ENCODE measurements at regions of chr10 and their contacts with region 1.

Region 1: GRCh38 chr10:25875556-25876165 is 58.4 kb upstream of the MYO3A start:
- DNase-seq: peak; percentile 33 to 50 (median 39)
- H3K4me3 ChIP-seq: no peak overlapping the region
- H3K4me3 Mint-ChIP-seq: no peak overlapping the region
- H3K27ac ChIP-seq: no peak overlapping the region
- H3K27ac Mint-ChIP-seq: no peak overlapping the region
- H3K4me1 ChIP-seq: no peaks in the 10 kb centered on the region
- H3K4me1 Mint-ChIP-seq: no peaks in the 10 kb centered on the region
- H3K27me3 ChIP-seq: no peaks in the 10 kb centered on the region
- H3K27me3 Mint-ChIP-seq: peaks cover 1 to 2% of the 10 kb centered on the region in 2 donors

Region 2: GRCh38 chr10:25899304-25899703 is 23.6 kb after region 1 on chr10:
- CTCF ChIA-PET with region 1: interaction called, 12 read pairs
- POLR2A ChIA-PET with region 1: no interaction called
- intact Hi-C with region 1: no loop called
- DNase-seq: no peak
- H3K4me3 ChIP-seq: no peak overlapping the region
- H3K4me3 Mint-ChIP-seq: no peak overlapping the region
- H3K27ac ChIP-seq: no peak overlapping the region
- H3K27ac Mint-ChIP-seq: no peak overlapping the region
- H3K4me1 ChIP-seq: no peaks in the 10 kb centered on the region
- H3K4me1 Mint-ChIP-seq: no peaks in the 10 kb centered on the region
- H3K27me3 ChIP-seq: no peaks in the 10 kb centered on the region
- H3K27me3 Mint-ChIP-seq: peaks cover 0 to 3% of the 10 kb centered on the region in 2 donors

Region 3: GRCh38 chr10:26391701-26392695 is 516.3 kb after region 1 on chr10:
- CTCF ChIA-PET with region 1: no interaction called
- POLR2A ChIA-PET with region 1: no interaction called
- intact Hi-C with region 1: no loop called
- DNase-seq: peak in 2 of 5 donors; percentile 4 to 25
- H3K4me3 ChIP-seq: no peak overlapping the region
- H3K4me3 Mint-ChIP-seq: peak overlapping the region in 5 of 8 donors; percentile 17 to 55 (median 39)
- H3K27ac ChIP-seq: no peak overlapping the region
- H3K27ac Mint-ChIP-seq: no peak overlapping the region
- H3K4me1 ChIP-seq: no peaks in the 10 kb centered on the region
- H3K4me1 Mint-ChIP-seq: peaks cover 0 to 11% (median 1%) of the 10 kb centered on the region in 4 donors
- H3K27me3 ChIP-seq: no peaks in the 10 kb centered on the region
- H3K27me3 Mint-ChIP-seq: peaks cover 11 to 14% of the 10 kb centered on the region in 2 donors